Dendritic cell treated with granulocyte-macrophage colony-stimulating factor and Interleukin-4, amounts not matched to agents 40 ng/mL and 50 ng/mL, for 4 days (primary cell): ENCODE measurements at regions of chr14 and their contacts with region 1.

Region 1: DNA sequence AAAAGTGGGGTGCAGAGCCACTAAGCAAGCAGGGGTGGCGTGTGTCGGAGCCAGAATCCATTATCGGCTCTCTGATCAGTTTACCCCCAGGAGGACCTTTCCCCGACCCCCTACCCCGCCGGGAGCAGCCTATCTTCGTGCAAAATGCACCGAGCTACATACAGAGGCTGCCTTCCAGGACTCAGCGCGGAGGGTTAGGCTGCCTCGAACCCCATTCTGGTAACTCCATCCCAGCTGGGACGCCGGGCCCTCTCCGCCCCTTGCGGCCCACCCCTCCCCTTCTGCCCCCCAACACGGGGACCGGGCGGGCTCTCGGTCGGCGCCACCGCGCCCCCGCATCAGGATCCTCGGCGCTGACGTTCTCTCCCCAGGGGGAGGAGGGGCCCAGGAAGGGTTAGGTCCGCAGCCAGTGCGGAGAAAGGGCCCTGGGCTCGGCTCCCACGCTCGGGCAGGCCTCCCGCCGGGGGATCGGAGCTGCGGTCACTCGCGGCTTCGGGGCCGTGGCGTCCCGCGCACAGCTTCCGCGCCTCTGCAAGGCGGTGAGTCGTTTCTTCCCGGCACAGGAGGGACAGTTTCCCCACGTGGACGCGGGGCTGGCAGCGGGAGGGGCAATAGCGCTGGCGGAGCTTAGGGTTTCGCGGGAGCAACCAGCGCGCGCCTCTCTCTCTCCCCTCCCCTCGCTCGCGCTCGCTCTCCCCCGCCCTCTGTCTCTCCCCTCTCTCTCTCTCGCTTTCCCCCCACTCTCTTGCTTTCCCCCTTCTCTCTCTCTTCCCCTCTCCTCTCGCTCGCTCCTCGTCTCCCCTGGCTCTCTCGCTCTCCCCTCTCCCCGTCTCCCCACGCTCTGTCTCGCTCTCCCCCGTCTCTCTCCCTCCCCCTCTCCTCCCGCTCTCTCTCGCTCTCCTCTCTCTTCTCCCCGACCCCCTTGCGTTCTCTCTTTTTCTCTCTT is 12.5 kb upstream of the MAP3K9 start:
- H3K4me3 Mint-ChIP-seq: peak overlapping the region; percentile 77
- H3K27ac Mint-ChIP-seq: peak overlapping the region; percentile 43
- H3K4me1 Mint-ChIP-seq: peaks cover 14% of the 10 kb centered on the region
- H3K27me3 Mint-ChIP-seq: peaks cover 63% of the 10 kb centered on the region

Region 2: GRCh38 chr14:70622111-70622712 is 199.6 kb before region 1 on chr14:
- intact Hi-C with region 1: loop called (anchors 1 kb)
- H3K4me3 Mint-ChIP-seq: no peak overlapping the region
- H3K27ac Mint-ChIP-seq: no peak overlapping the region
- H3K4me1 Mint-ChIP-seq: no peaks in the 10 kb centered on the region
- H3K27me3 Mint-ChIP-seq: peaks cover 7% of the 10 kb centered on the region

Region 3: DNA sequence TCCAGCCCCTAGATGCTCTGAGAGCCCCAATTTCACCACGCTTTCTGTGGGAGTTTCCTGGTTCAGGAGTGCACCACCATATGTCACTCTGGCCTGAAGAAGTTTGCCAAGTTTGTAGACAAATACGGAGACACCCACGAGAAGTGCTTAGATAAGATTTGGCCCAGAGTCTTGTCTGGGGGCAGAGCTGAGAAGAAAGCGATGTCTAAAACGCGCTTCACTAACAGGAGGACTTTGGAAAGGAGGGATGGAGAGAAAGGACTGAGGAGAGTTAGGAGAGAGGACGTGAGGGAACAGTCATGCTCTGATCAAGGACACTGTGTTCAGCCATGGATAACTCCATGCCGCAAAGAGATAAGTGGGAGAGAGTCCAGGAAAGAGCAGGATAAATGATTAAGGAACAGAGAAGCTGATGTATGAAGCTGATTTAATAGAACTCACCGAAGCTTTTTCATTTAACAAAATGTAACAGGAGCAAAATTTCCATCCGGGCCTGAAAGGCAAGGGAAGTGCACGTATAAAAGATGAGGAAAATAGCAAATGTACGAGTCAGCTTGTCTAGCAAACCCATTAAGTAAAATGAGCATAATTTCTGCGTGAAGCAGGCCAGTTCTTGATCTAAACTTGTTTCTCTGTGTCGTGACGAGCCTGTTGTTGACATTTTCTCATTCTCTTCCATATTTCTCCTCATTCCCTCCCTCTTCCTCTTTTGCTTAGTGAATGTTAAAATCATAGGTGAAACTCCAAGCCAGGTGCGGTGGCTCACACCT is 10.9 kb after region 1 on chr14:
- intact Hi-C with region 1: no loop called
- H3K4me3 Mint-ChIP-seq: no peak overlapping the region
- H3K27ac Mint-ChIP-seq: no peak overlapping the region
- H3K4me1 Mint-ChIP-seq: no peaks in the 10 kb centered on the region
- H3K27me3 Mint-ChIP-seq: no peaks in the 10 kb centered on the region

Region 4: GRCh38 chr14:70887207-70887681 is 65.4 kb after region 1 on chr14:
- intact Hi-C with region 1: loop called (anchors 10 kb)
- H3K4me3 Mint-ChIP-seq: peak overlapping the region; percentile 47
- H3K27ac Mint-ChIP-seq: peak overlapping the region; percentile 79
- H3K4me1 Mint-ChIP-seq: peaks cover 60% of the 10 kb centered on the region
- H3K27me3 Mint-ChIP-seq: peaks cover 71% of the 10 kb centered on the region

Region 5: DNA sequence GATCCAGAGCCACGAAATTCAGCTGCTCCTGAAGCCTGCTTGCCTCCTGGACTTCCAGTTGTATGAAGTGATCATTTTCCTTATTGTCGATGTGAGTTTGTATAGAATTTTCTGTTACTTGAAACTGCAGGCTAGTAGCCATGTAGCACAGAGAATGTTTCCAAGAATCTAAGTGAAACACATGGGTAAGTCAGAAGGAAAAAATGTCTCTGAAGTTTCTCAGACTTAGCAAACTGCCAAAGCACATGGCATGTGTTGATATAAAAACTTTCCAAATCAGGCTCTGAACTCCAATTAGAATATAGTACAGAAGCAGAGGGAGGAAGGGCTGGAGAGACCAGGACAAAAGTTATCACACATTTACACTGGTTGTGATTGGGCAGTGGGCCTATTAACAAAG is 75.6 kb after region 1 on chr14:
- intact Hi-C with region 1: no loop called
- H3K4me3 Mint-ChIP-seq: no peak overlapping the region
- H3K27ac Mint-ChIP-seq: no peak overlapping the region
- H3K4me1 Mint-ChIP-seq: peaks cover 39% of the 10 kb centered on the region
- H3K27me3 Mint-ChIP-seq: peaks cover 47% of the 10 kb centered on the region

Region 6: DNA sequence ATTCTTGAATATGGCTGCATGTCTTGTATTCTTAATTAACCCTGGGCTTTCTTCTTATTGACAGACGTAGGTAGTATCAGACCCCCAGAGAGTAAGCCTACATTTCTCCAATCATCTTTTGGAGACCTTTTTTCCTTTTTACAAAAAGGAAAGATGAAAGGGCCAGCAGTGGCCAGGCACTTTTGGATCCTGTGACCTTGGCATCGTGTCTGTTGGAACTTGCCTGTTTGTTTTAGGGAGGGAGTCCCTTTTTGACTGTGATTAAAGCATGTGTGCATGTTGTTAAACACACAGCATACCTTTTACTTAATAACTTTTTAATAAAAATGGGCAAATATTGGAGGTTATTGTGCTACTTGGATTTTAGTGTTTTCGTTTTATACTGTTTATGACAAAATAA is 142.6 kb after region 1 on chr14:
- intact Hi-C with region 1: no loop called
- H3K4me3 Mint-ChIP-seq: no peak overlapping the region
- H3K27ac Mint-ChIP-seq: no peak overlapping the region
- H3K4me1 Mint-ChIP-seq: no peaks in the 10 kb centered on the region
- H3K27me3 Mint-ChIP-seq: no peaks in the 10 kb centered on the region